Panc1 (cell line): ENCODE measurements at regions of chr16 and their contacts with region 1.

Region 1: GRCh38 chr16:82755569-82756282 is 129.0 kb downstream of the CDH13 start:
- DNase-seq: no peak
- ATAC-seq: no peak
- H3K4me3 ChIP-seq: no peak overlapping the region
- H3K27ac ChIP-seq: no peak overlapping the region
- H3K4me1 ChIP-seq: no peaks in the 10 kb centered on the region
- H3K27me3 ChIP-seq: no peaks in the 10 kb centered on the region
- CTCF ChIP-seq: peak; percentile 19; the same call in 1 of the 2 replicates

Region 2: DNA sequence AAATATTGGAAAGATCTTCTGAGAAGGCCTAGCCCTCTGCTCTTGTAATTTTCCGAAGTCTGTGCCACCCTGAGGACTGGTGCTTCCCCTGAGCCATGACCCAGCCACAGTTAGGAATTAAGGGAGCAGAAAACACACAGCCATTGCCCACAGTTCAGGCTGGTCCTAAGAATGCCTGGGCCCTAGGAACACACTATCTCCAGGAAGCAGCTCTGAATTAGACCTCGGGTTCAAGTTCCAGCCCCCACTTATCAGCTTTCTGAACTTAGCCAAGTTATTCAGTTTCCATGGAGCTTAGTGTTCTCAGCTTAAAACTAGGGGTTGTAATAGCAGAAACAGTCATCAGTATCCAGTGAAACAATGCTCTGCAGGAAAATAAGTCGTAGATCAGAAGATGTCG is 73.0 kb before region 1 on chr16:
- CTCF ChIA-PET with region 1: interaction called, 4 read pairs
- POLR2A ChIA-PET with region 1: no interaction called
- in situ Hi-C with region 1: no loop called
- intact Hi-C with region 1: loop called (anchors 1 kb)
- DNase-seq: no peak
- ATAC-seq: no peak
- H3K4me3 ChIP-seq: no peak overlapping the region
- H3K27ac ChIP-seq: no peak overlapping the region
- H3K4me1 ChIP-seq: no peaks in the 10 kb centered on the region
- H3K27me3 ChIP-seq: no peaks in the 10 kb centered on the region
- CTCF ChIP-seq: no peak

Region 3: DNA sequence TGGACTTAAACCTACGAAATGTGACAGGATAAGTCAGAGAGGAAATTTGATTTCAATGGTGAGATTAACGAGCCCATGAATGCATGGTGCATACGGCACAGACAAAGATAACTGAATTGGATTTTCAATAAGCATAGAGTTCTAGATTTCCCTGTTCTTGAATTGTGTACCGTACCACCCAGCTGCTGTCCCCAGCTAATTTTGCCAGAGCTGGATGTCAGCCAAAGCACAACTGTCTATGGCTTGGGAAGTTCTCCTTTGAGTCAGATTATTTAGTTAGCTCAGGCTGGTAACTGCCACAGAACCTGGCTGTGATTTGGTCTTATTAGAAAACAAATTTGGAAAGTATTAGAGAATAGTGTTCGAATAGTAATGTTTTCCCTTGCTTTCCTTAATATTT is 14.1 kb after region 1 on chr16:
- CTCF ChIA-PET with region 1: no interaction called
- POLR2A ChIA-PET with region 1: no interaction called
- in situ Hi-C with region 1: no loop called
- intact Hi-C with region 1: no loop called
- DNase-seq: no peak
- ATAC-seq: no peak
- H3K4me3 ChIP-seq: no peak overlapping the region
- H3K27ac ChIP-seq: no peak overlapping the region
- H3K4me1 ChIP-seq: no peaks in the 10 kb centered on the region
- H3K27me3 ChIP-seq: no peaks in the 10 kb centered on the region
- CTCF ChIP-seq: no peak